ENCODE measurements at regions of chr21 and their contacts with region 1.

Region 1: DNA sequence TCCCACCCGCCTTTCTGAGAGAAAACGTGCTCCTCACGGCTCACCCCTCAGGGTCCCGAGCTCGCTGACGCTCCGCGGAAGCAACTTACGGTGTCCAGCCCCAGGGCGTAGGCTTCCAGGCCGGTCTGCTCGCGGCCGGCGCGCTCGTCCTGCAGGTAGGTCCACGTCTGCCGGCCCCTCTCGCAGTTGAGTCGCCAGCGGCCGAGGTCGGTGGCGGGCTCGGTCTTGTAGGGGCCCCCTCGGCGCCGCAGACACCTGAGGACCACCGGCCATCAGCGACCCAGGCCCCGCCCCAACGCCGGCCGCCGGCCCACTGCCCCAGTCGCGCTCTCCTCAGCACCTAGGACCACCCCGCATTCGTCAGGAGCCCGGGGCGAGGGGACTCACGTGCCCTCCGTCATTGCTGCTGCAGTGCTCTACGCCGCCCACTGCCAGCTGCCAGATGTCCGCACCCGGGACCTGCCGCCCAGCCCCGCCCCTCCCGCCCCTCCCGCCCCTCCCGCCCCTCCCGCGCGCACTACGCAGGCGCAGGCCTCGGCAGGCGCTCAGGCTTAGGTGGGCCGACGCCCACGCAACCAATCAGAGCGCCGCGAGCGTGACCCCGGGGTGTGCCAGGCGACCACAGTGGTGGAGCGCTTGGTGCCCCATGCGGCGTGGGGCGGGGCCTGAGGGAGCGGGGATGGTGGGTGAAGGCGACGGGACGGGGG is at the start of gene LSS:
- DNase-seq: peak; percentile 98
- ATAC-seq: peak; percentile 93
- H3K4me3 ChIP-seq: peak within 1 kb of the TSS; percentile 86
- H3K27ac ChIP-seq: peak within 1 kb of the TSS; percentile 33
- H3K4me1 ChIP-seq: peaks cover 32% of the 10 kb centered on the region
- H3K27me3 ChIP-seq: no peaks in the 10 kb centered on the region
- CTCF ChIP-seq: no peak
- total RNA-seq, gene LSS: 45.7 and 53.9 TPM in 2 replicates

Region 2: DNA sequence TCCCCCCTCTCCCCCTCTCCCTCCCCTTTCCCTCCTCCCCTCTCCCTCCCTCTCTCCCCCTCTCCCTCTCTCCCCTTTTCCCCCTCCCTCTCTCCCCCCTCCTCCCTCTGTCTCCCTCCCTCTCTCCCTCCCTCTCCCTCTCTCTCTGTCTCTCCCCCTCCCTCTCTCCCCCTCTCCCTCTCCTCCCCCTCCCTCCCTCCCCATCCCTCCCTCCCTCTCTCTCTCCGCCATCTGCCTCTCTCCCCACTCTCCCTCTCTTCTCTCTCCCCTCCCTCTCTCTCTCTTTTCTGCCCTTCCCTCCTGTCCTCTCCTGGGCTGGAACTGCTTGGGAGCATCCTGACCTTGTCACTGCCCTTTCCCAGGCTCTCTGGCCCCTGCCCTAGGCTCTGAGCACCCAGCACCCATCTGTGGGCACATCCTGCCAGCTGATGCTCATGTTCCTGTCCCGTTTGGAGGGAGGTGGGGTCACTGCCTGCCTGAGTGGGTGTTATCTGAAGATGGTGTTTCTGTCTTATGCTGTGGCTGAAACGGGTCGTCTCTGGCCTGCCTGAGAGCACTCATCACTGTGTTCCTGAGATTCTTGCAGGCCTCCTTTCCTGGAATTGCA is 83.9 kb before region 1 on chr21:
- CTCF ChIA-PET with region 1: interaction called, 3 read pairs
- POLR2A ChIA-PET with region 1: no interaction called
- intact Hi-C with region 1: loop called (anchors 2 kb)
- DNase-seq: no peak
- ATAC-seq: no peak
- H3K4me3 ChIP-seq: no peak overlapping the region
- H3K27ac ChIP-seq: no peak overlapping the region
- H3K4me1 ChIP-seq: peaks cover 5% of the 10 kb centered on the region; the same call in 1 of the 2 replicates
- H3K27me3 ChIP-seq: no peaks in the 10 kb centered on the region
- CTCF ChIP-seq: no peak

Region 3: DNA sequence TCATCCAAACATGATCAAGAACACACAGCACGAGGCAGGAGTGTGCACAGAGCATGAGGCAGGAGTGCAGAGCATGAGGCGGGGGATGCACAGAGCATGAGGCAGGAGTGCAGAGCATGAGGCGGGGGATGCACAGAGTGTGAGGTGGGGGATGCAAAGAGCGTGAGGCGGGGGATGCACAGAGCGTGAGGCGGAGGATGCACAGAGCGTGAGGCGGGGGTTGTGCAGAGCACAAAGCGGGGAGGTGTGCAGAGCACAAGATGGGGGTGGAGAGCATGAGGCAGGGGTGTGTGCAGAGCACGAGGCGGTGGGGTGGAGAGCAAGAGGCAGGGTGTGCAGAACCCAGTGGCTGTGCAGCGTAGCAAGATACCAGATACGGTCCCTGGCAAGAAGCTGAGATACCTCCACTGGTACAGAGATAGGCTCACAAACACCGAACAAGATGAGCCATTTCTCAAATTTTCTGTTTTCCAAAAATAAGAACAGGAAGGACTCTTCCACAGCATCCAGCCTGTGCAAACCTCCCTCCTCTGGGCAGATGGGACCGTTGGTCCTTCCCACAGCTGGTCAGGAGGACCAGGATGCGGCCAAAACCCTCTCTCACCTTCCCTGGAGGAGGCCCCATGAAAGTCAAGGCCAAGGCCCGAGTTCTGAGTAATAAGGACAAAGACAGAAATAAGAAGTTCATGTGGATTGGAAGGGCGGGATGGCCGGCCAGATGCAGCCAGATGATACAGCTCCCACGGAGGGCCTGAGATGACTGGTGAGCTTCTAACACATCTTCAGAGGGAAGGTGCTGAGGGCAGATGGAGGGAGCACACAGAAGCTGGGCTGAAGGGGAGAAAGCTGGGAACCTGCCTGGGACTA is 56.3 kb before region 1 on chr21:
- CTCF ChIA-PET with region 1: no interaction called
- POLR2A ChIA-PET with region 1: interaction called, 13 read pairs
- intact Hi-C with region 1: no loop called
- DNase-seq: no peak
- ATAC-seq: no peak
- H3K4me3 ChIP-seq: no peak overlapping the region
- H3K27ac ChIP-seq: no peak overlapping the region
- H3K4me1 ChIP-seq: peaks cover 12% of the 10 kb centered on the region
- H3K27me3 ChIP-seq: no peaks in the 10 kb centered on the region
- CTCF ChIP-seq: no peak

Region 4: GRCh38 chr21:46184625-46185555 is 43.6 kb before region 1 on chr21:
- CTCF ChIA-PET with region 1: no interaction called
- POLR2A ChIA-PET with region 1: no interaction called
- intact Hi-C with region 1: loop called (anchors 2 kb)
- DNase-seq: peak; percentile 65
- ATAC-seq: peak; percentile 75
- H3K4me3 ChIP-seq: peak overlapping the region; percentile 96
- H3K27ac ChIP-seq: peak overlapping the region; percentile 34
- H3K4me1 ChIP-seq: peaks cover 30% of the 10 kb centered on the region
- H3K27me3 ChIP-seq: no peaks in the 10 kb centered on the region
- CTCF ChIP-seq: no peak

Region 5: GRCh38 chr21:46285761-46286496 is 57.4 kb after region 1 on chr21 and contains the start of gene YBEY:
- CTCF ChIA-PET with region 1: no interaction called
- POLR2A ChIA-PET with region 1: no interaction called
- intact Hi-C with region 1: loop called (anchors 2 kb)
- DNase-seq: peak; percentile 92
- ATAC-seq: peak; percentile 90
- H3K4me3 ChIP-seq: peak within 1 kb of the TSS; percentile 75
- H3K27ac ChIP-seq: peak within 1 kb of the TSS; percentile 84
- H3K4me1 ChIP-seq: peaks cover 30% of the 10 kb centered on the region
- H3K27me3 ChIP-seq: no peaks in the 10 kb centered on the region
- CTCF ChIP-seq: peak; percentile 46; the same call in 1 of the 2 replicates
- total RNA-seq, gene YBEY: 38.2 and 39.0 TPM in 2 replicates

Measured in PC-3 (cell line).